ENCODE measurements at regions of chr6 and their contacts with region 1.

Region 1: GRCh38 chr6:127120787-127121636 is 2.5 kb downstream of the RSPO3 start:
- DNase-seq: peak; percentile 45
- H3K4me3 Mint-ChIP-seq: no peak overlapping the region
- H3K27ac Mint-ChIP-seq: no peak overlapping the region
- H3K4me1 Mint-ChIP-seq: peaks cover 12% of the 10 kb centered on the region
- H3K27me3 Mint-ChIP-seq: peaks cover 65% of the 10 kb centered on the region

Region 2: DNA sequence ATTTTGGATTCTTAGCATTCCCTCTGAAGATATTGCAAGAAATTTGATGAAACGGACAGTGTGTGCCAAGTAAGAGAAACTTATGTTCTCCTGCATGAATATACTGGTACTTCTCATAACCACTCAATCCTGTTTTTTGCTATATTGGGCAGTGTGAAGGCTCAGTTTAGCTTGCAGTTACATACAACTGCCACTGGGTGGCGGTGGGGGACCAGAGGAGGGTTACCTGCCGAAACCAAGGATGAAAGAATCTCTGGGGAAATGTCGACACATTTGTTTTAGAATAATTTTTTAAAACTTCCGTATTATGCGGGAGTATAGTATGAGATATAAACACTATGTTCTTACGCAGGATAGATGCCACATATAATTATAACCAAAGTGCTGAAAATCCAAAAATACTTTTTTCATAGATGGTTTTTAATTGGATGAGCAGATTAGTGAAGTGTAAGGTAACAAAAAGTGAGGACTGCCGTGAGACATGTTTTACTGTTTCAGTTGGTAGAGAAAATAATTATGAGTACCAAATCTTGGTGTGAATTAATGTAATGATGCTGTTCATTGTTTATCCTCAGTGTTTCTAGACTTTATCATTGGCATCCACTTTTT is 1124.9 kb before region 1 on chr6:
- intact Hi-C with region 1: loop called (anchors 1 kb)
- DNase-seq: peak; percentile 60
- H3K4me3 Mint-ChIP-seq: peak overlapping the region; percentile 45
- H3K27ac Mint-ChIP-seq: no peak overlapping the region
- H3K4me1 Mint-ChIP-seq: peaks cover 18% of the 10 kb centered on the region
- H3K27me3 Mint-ChIP-seq: no peaks in the 10 kb centered on the region

Region 3: DNA sequence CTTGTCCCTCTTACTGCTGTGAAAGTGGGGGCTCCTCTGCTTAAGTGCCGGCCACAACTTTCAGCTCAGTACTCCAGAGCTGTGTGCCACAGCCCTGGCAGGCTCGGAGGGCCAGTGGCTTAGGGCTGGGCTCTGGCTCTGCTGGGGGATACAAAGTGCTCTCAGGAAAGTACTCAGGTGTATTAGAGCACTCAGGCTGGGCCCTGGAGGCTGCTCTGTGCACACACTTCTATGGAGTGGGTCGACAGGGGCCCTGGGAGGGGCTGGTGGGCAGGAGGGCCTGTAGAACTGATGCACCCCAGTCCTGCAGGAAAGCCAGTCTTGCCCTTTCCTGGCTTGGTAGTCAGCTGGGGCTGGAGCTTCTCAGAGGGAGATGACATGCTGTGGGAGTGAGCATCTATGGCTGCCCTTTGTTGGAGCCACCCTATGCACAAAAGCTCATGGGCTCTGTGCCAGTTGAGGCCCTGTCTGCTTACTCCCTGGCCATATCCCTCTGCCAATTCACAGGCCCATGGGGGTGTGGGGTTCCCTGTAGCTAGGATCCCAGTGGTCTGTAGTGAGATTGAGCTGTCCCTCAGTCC is 759.1 kb before region 1 on chr6:
- intact Hi-C with region 1: loop called (anchors 1 kb)
- DNase-seq: no peak
- H3K4me3 Mint-ChIP-seq: no peak overlapping the region
- H3K27ac Mint-ChIP-seq: no peak overlapping the region
- H3K4me1 Mint-ChIP-seq: no peaks in the 10 kb centered on the region
- H3K27me3 Mint-ChIP-seq: no peaks in the 10 kb centered on the region

Region 4: GRCh38 chr6:126804332-126805064 is 316.5 kb before region 1 on chr6:
- intact Hi-C with region 1: loop called (anchors 1 kb)
- DNase-seq: no peak
- H3K4me3 Mint-ChIP-seq: no peak overlapping the region
- H3K27ac Mint-ChIP-seq: no peak overlapping the region
- H3K4me1 Mint-ChIP-seq: no peaks in the 10 kb centered on the region
- H3K27me3 Mint-ChIP-seq: no peaks in the 10 kb centered on the region

Region 5: GRCh38 chr6:127266178-127266891 is 145.3 kb after region 1 on chr6 and contains the start of gene RNF146:
- intact Hi-C with region 1: loop called (anchors 5 kb)
- DNase-seq: peak; percentile 63
- H3K4me3 Mint-ChIP-seq: peak within 1 kb of the TSS; percentile 100
- H3K27ac Mint-ChIP-seq: peak within 1 kb of the TSS; percentile 100
- H3K4me1 Mint-ChIP-seq: peaks cover 42% of the 10 kb centered on the region
- H3K27me3 Mint-ChIP-seq: peaks cover 9% of the 10 kb centered on the region
- total RNA-seq, gene RNF146: 18.3 and 20.5 TPM in 2 replicates

Region 6: GRCh38 chr6:127547215-127547614 is 426.2 kb after region 1 on chr6:
- intact Hi-C with region 1: loop called (anchors 10 kb)
- DNase-seq: no peak
- H3K4me3 Mint-ChIP-seq: no peak overlapping the region
- H3K27ac Mint-ChIP-seq: no peak overlapping the region
- H3K4me1 Mint-ChIP-seq: no peaks in the 10 kb centered on the region
- H3K27me3 Mint-ChIP-seq: peaks cover 29% of the 10 kb centered on the region

Measured in activated T-helper 1 cell treated with anti-CD3 and anti-CD28 coated beads, Interleukin-12 subunit alpha, Interleukin-12 subunit beta, Interleukin-2, Interleukin-4 antibody, amounts not matched to agents 30 ng/mL and 10 ng/mL and 1 ng/mL, durations not matched to agents 14 hours and 24 hours and 36 hours (primary cell).